Transverse colon (tissue), 4 donors: ENCODE measurements at regions of chr17 and their contacts with region 1.

Region 1: GRCh38 chr17:30336369-30337171 is 2.7 kb upstream of the TMIGD1 start:
- DNase-seq: peak; percentile 74
- H3K4me3 ChIP-seq: no peak overlapping the region
- H3K27ac ChIP-seq: peak overlapping the region; percentile 67 to 74 (median 70)
- H3K4me1 ChIP-seq: peaks cover 4 to 40% (median 21%) of the 10 kb centered on the region in 4 donors
- H3K27me3 ChIP-seq: no peaks in the 10 kb centered on the region
- CTCF ChIP-seq: peak; percentile 57 to 90 (median 63)
- EP300 ChIP-seq: no peak
- POLR2A ChIP-seq: no peak

Region 2: GRCh38 chr17:30116661-30117551 is 219.7 kb before region 1 on chr17 and contains the start of gene NSRP1:
- in situ Hi-C with region 1: loop called in 2 of 4 experiments (anchors 25 kb)
- intact Hi-C with region 1: no loop called
- DNase-seq: peak; percentile 97
- H3K4me3 ChIP-seq: peak within 1 kb of the TSS; percentile 45 to 90 (median 72)
- H3K27ac ChIP-seq: peak within 1 kb of the TSS; percentile 89 to 100 (median 96)
- H3K4me1 ChIP-seq: peaks cover 10 to 43% (median 21%) of the 10 kb centered on the region in 4 donors
- H3K27me3 ChIP-seq: no peaks in the 10 kb centered on the region
- CTCF ChIP-seq: no peak
- EP300 ChIP-seq: peak; percentile 9
- POLR2A ChIP-seq: peak; percentile 98
- total RNA-seq, gene NSRP1: 16.2 to 60.2 (median 42.7) TPM

Region 3: DNA sequence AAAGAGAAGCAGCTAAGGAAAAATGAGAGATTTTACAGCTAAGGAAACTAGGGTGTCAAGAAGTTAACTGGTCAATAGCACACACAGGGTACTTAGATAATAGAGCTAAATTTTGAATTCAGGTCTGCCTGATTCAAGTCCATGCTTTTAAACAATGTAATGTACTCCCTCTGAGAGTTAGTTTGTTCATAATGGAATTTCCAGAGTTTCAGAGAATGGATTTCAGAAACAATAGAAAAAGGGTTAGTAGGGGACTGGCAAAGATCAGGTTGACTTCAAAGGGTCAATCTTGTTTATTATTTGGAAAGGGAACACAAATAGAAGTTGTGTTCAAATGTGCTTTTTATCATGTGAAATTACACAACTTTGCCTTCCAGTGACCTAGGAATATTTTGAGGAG is 202.0 kb before region 1 on chr17:
- in situ Hi-C with region 1: loop called in 1 of 4 experiments (anchors 5 kb)
- intact Hi-C with region 1: no loop called
- DNase-seq: no peak
- H3K4me3 ChIP-seq: no peak overlapping the region
- H3K27ac ChIP-seq: no peak overlapping the region
- H3K4me1 ChIP-seq: no peaks in the 10 kb centered on the region
- H3K27me3 ChIP-seq: no peaks in the 10 kb centered on the region
- CTCF ChIP-seq: no peak
- EP300 ChIP-seq: no peak
- POLR2A ChIP-seq: no peak

Region 4: GRCh38 chr17:30433514-30433913 is 96.9 kb after region 1 on chr17:
- in situ Hi-C with region 1: no loop called
- intact Hi-C with region 1: no loop called
- DNase-seq: no peak
- H3K4me3 ChIP-seq: no peak overlapping the region
- H3K27ac ChIP-seq: no peak overlapping the region
- H3K4me1 ChIP-seq: no peaks in the 10 kb centered on the region
- H3K27me3 ChIP-seq: no peaks in the 10 kb centered on the region
- CTCF ChIP-seq: no peak
- EP300 ChIP-seq: no peak
- POLR2A ChIP-seq: no peak

Region 5: GRCh38 chr17:30590081-30590733 is 253.6 kb after region 1 on chr17:
- in situ Hi-C with region 1: no loop called
- intact Hi-C with region 1: no loop called
- DNase-seq: no peak
- H3K4me3 ChIP-seq: no peak overlapping the region
- H3K27ac ChIP-seq: no peak overlapping the region
- H3K4me1 ChIP-seq: no peaks in the 10 kb centered on the region
- H3K27me3 ChIP-seq: no peaks in the 10 kb centered on the region
- CTCF ChIP-seq: no peak
- EP300 ChIP-seq: no peak
- POLR2A ChIP-seq: no peak